ENCODE measurements at regions of chr22 and their contacts with region 1.

Region 1: GRCh38 chr22:40728731-40729189 is 49.5 kb downstream of the MCHR1 start:
- DNase-seq: peak; percentile 44 to 84 (median 62)
- ATAC-seq: peak; percentile 58
- H3K4me3 ChIP-seq: no peak overlapping the region
- H3K4me3 Mint-ChIP-seq: peak overlapping the region; percentile 62
- H3K27ac ChIP-seq: peak overlapping the region; percentile 59 to 67
- H3K27ac Mint-ChIP-seq: peak overlapping the region; percentile 98
- H3K4me1 ChIP-seq: peaks cover 62% of the 10 kb centered on the region
- H3K4me1 Mint-ChIP-seq: peaks cover 51% of the 10 kb centered on the region
- H3K27me3 ChIP-seq: no peaks in the 10 kb centered on the region
- H3K27me3 Mint-ChIP-seq: no peaks in the 10 kb centered on the region
- CTCF ChIP-seq: no peak

Region 2: DNA sequence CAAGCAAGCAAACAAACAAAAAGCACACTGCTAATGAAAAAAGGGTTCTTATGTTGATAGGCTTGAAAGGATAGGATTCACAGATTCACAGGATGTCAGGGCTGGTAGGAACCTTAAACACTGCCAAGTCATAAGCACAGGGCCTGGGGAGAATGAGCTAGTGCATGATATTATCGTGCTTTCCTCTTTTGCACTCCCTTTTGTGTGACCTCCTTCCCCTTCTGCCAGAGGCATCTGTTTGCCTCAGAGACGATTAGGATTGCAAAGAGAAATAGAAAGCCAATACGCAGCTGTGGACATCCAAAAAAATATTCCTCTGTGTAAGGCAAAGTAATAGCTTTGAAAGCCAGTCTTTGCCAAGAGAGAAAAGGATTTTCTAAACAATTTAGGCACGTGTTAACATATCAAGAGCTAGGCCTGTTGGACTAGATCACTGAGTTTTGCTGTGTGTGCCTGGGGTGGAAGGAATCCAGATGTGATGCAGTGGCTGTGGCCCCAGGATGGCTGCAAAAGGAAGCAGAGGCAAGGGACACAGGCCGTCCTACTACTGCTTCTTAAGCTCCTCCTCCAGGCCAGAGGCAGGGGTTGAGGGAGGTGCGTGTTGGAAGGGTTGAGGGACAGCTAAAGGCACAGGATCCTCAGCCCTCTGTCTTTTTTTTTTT is 18.9 kb before region 1 on chr22:
- CTCF ChIA-PET with region 1: no interaction called
- POLR2A ChIA-PET with region 1: interaction called, 5 read pairs
- intact Hi-C with region 1: loop called in 1 of 2 experiments (anchors 2 kb)
- DNase-seq: no peak
- ATAC-seq: no peak
- H3K4me3 ChIP-seq: no peak overlapping the region
- H3K4me3 Mint-ChIP-seq: no peak overlapping the region
- H3K27ac ChIP-seq: no peak overlapping the region
- H3K27ac Mint-ChIP-seq: no peak overlapping the region
- H3K4me1 ChIP-seq: peaks cover 11% of the 10 kb centered on the region
- H3K4me1 Mint-ChIP-seq: peaks cover 9% of the 10 kb centered on the region
- H3K27me3 ChIP-seq: no peaks in the 10 kb centered on the region
- H3K27me3 Mint-ChIP-seq: no peaks in the 10 kb centered on the region
- CTCF ChIP-seq: no peak

Region 3: GRCh38 chr22:40739721-40740120 is 11.0 kb after region 1 on chr22:
- CTCF ChIA-PET with region 1: no interaction called
- POLR2A ChIA-PET with region 1: no interaction called
- intact Hi-C with region 1: no loop called
- DNase-seq: no peak
- ATAC-seq: no peak
- H3K4me3 ChIP-seq: no peak overlapping the region
- H3K4me3 Mint-ChIP-seq: no peak overlapping the region
- H3K27ac ChIP-seq: no peak overlapping the region
- H3K27ac Mint-ChIP-seq: no peak overlapping the region
- H3K4me1 ChIP-seq: no peaks in the 10 kb centered on the region
- H3K4me1 Mint-ChIP-seq: no peaks in the 10 kb centered on the region
- H3K27me3 ChIP-seq: no peaks in the 10 kb centered on the region
- H3K27me3 Mint-ChIP-seq: no peaks in the 10 kb centered on the region
- CTCF ChIP-seq: no peak

Region 4: DNA sequence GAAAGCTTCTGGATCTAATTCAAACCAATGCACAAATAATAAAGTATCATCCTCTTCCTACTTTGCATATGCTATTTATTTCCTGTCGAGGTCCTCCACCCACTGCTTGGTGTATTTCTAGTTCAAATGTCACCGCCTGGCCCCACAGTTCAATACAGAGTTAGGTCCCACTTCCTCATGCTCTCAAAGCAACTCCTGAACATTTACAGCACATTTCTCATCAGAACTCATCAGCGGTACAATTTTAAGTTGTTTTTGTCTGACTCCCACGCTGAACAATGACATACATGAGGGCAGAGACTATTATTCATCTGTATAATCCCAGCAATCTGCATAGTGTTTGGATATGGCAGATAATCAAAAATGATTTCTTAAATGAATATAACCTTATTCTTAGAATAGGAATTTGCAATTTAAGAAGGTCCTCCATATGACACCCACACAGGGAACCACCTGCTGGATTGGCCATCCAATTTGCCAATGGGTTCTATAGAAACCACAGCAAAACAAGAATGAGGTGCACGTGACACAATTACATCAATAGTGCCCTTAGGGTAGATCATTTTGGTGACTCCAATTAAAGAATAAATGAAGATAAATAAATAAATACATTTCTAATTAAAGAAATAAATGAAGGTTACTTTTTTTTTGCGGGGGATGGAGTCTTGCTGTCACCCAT is 36.1 kb after region 1 on chr22:
- CTCF ChIA-PET with region 1: interaction called, 8 read pairs
- POLR2A ChIA-PET with region 1: no interaction called
- intact Hi-C with region 1: loop called in 1 of 2 experiments (anchors 5 kb)
- DNase-seq: peak in 6 of 9 experiments; percentile 7 to 52 (median 20)
- ATAC-seq: peak; percentile 67
- H3K4me3 ChIP-seq: no peak overlapping the region
- H3K4me3 Mint-ChIP-seq: peak overlapping the region; percentile 17
- H3K27ac ChIP-seq: peak overlapping the region; percentile 21 to 53
- H3K27ac Mint-ChIP-seq: peak overlapping the region; percentile 89
- H3K4me1 ChIP-seq: peaks cover 12% of the 10 kb centered on the region
- H3K4me1 Mint-ChIP-seq: peaks cover 16% of the 10 kb centered on the region
- H3K27me3 ChIP-seq: no peaks in the 10 kb centered on the region
- H3K27me3 Mint-ChIP-seq: no peaks in the 10 kb centered on the region
- CTCF ChIP-seq: no peak

Region 5: DNA sequence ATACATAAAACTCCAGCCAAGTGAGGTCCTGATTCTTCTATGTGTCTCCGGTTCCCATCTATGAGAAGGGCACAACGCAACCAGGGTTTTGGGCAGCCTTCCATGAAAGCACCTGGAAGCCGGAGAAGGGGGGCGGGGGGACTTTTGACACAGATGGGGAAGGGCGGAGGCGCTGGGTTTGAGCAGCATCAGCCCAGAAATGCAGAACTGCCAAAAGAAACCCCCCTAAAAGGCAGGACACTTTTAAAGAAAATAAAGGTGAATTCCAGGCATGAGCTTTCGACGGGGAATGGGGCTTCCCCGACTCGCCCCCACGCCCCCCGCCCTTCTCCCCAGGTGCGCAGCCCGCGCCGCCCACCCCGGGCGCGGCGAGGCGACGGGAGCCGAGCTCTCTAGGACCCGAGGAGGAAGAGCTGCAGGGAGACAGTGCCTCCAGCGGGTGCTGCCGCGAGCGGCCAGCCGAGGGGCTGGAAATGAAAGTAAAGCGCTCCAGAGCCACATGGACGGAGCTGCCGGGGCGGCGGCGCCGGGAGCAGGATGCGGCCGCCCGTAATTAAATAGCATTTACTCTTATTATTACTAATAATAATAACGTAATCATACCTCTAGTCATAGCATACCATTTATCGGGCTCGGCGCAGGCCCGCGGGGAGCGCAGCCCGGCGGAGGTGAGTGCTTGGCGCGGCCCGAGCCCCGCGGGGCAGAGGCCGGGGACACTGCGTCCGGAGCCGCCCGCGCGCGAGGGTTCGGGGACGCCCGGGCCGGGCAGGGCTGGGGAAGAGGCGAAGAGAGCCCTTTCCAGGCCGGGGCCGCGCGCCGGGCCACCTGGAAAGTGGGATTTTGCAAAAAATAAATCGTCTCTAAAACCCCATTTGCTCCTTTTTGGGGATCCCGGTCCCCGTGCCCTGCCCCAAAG is 572.6 kb after region 1 on chr22 and contains the start of gene ZC3H7B:
- CTCF ChIA-PET with region 1: no interaction called
- POLR2A ChIA-PET with region 1: no interaction called
- intact Hi-C with region 1: no loop called
- DNase-seq: peak; percentile 64 to 94 (median 81)
- ATAC-seq: peak; percentile 93
- H3K4me3 ChIP-seq: peak within 1 kb of the TSS; percentile 81 to 96
- H3K4me3 Mint-ChIP-seq: peak within 1 kb of the TSS; percentile 83
- H3K27ac ChIP-seq: peak within 1 kb of the TSS; percentile 72 to 80
- H3K27ac Mint-ChIP-seq: peak within 1 kb of the TSS; percentile 95
- H3K4me1 ChIP-seq: peaks cover 16% of the 10 kb centered on the region
- H3K4me1 Mint-ChIP-seq: peaks cover 29% of the 10 kb centered on the region
- H3K27me3 ChIP-seq: no peaks in the 10 kb centered on the region
- H3K27me3 Mint-ChIP-seq: no peaks in the 10 kb centered on the region
- CTCF ChIP-seq: peak; percentile 43
- total RNA-seq, gene ZC3H7B: 30.7 to 30.8 TPM

Measured in CD8-positive, alpha-beta T cell (primary cell).